ENCODE measurements at regions of chr1 and their contacts with region 1.

Region 1: DNA sequence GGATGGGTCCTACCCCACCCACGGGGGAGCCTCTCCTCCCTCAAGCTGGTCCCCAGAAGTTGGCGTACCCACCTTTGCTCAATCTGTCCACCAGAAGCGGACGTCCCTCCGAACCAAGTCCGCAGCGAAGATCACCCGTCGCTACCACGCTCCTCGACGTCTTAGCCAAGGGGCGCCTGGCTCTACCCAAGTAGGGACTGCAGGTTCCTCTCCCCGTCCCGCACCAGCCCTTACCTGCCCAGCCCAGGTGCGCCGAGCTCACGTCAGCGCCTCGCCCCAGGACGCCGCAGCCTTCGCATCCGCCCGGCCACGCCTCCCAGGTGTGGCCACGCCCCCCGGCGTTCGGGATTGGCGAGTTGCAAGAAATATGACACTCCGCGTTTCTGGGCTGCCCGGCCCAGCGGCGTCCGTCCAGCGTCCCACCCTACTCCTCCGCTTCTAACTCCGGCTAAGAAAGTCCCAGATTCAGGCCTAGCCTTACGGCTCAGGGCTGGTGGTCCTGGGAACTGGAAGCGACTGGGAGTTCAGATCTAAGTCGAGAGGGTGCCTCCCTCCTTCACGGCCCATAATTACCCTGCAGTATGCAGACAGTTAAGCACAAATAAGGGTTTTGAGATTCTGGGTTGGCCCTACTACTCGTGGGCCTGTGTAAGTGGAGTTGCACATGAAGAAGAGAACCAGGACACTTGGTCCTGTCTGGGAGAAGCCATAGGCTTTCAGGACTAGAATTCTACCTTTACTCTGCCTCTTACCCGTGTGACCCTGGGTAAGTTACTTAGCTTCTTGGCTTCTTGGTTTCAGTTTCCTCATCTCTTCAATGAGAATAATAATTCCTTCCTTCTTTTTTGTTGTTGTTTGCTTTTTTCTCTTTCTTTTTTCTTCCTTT is at the start of gene IRF6:
- DNase-seq: peak; percentile 60 to 71 (median 69)
- H3K4me3 ChIP-seq: peak within 1 kb of the TSS in 1 of 2 donors; percentile 59
- H3K4me3 Mint-ChIP-seq: peak within 1 kb of the TSS; percentile 91 to 97 (median 92)
- H3K27ac ChIP-seq: no peak within 1 kb of the TSS
- H3K27ac Mint-ChIP-seq: peak within 1 kb of the TSS; percentile 75 to 94 (median 91)
- H3K4me1 ChIP-seq: peaks cover 12% of the 10 kb centered on the region
- H3K4me1 Mint-ChIP-seq: peaks cover 6 to 13% (median 10%) of the 10 kb centered on the region in 4 donors
- H3K27me3 ChIP-seq: no peaks in the 10 kb centered on the region
- H3K27me3 Mint-ChIP-seq: peaks cover 0 to 5% of the 10 kb centered on the region in 2 donors
- total RNA-seq, gene IRF6: 0.15 to 0.50 TPM

Region 2: DNA sequence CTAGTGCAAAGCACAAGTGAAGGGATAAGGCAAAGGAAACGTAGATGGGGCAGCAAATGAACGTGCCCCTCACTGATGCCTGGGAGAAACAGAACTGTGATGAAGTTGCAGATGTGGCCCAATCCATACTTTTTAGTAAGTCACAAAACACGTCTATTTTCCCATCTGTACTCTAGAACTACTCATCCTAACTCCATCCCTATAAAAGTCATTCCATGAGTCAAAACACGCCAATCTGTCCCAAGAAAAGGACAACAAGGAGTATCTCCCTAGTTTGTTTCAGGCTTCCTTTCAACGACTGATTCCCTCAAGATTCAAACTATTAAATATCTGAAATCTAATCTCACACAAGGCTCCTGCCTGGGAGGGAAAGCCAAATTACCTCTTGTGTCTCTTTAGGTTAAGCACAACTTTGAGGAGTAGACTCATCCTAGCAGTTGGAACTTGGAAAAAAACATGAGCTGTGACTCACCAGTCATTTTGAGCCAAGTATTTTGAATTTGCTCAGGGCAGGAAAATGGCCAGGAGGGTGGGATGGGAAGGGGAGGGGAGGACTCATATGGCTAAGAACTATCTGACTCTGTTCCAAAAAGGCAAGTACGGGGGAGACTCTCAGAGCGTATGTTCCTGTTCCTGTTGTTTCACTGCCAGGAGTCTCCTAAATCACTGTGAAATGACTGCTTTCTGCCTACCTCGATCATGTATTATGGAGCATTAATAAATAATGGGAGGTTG is 437.1 kb before region 1 on chr1:
- CTCF ChIA-PET with region 1: no interaction called
- POLR2A ChIA-PET with region 1: no interaction called
- intact Hi-C with region 1: no loop called
- DNase-seq: no peak
- H3K4me3 ChIP-seq: no peak overlapping the region
- H3K4me3 Mint-ChIP-seq: no peak overlapping the region
- H3K27ac ChIP-seq: no peak overlapping the region
- H3K27ac Mint-ChIP-seq: no peak overlapping the region
- H3K4me1 ChIP-seq: no peaks in the 10 kb centered on the region
- H3K4me1 Mint-ChIP-seq: no peaks in the 10 kb centered on the region
- H3K27me3 ChIP-seq: no peaks in the 10 kb centered on the region
- H3K27me3 Mint-ChIP-seq: peaks cover 2 to 16% of the 10 kb centered on the region in 2 donors

Region 3: DNA sequence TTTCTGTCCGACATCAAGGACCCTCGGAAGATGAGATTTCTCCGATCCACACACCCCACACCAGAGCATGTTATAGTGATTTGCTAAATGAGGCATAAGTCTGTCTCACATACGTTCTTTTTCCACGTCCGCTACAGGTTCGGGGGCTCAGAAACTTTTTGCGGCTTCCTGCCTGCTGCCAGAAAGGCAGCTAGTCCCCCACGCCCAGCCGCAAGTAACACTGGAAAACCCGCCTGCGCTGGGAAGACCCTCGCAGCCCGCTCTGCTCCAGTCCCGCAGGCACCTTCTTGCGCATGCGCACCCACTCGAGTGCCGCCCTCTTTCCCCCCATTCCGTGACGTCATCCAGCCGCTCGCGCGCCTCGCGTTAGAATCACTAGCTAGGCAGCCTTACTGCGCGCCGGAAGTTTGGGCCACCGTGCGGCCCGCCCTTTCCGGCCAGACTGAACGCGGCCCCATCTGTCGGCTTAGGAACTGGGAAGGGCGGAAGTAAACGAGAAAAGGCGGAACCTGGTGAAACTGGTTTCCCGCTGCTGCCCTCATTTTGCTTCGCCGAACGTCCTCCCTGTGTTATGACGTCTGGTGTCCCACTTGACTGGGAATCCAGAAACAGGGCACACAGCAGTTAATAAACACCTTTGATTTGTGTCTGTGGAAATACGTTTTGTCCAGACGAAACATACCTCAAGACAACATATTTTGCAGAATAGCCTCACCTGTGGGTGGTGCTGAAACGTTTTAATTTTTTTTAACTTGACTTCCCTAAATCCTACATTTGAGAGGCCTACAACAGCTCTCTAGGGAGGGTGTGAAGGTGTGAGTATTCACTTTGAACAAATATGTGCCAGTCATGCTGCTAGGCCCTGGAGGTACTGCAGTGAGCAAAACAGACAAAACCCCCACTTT is 21.6 kb before region 1 on chr1 and contains the start of gene C1orf74:
- CTCF ChIA-PET with region 1: interaction called, 11 read pairs
- POLR2A ChIA-PET with region 1: interaction called, 3 read pairs
- intact Hi-C with region 1: no loop called
- DNase-seq: peak; percentile 97 to 99 (median 98)
- H3K4me3 ChIP-seq: peak within 1 kb of the TSS; percentile 49 to 72
- H3K4me3 Mint-ChIP-seq: peak within 1 kb of the TSS; percentile 92 to 99 (median 96)
- H3K27ac ChIP-seq: peak within 1 kb of the TSS; percentile 67
- H3K27ac Mint-ChIP-seq: peak within 1 kb of the TSS; percentile 95 to 100 (median 99)
- H3K4me1 ChIP-seq: peaks cover 21% of the 10 kb centered on the region
- H3K4me1 Mint-ChIP-seq: peaks cover 15 to 35% (median 33%) of the 10 kb centered on the region in 4 donors
- H3K27me3 ChIP-seq: no peaks in the 10 kb centered on the region
- H3K27me3 Mint-ChIP-seq: peaks cover 0 to 3% of the 10 kb centered on the region in 2 donors
- total RNA-seq, gene C1orf74: 1.2 TPM